Heart left ventricle (tissue), 16 donors: ENCODE measurements at regions of chr10 and their contacts with region 1.

Region 1: DNA sequence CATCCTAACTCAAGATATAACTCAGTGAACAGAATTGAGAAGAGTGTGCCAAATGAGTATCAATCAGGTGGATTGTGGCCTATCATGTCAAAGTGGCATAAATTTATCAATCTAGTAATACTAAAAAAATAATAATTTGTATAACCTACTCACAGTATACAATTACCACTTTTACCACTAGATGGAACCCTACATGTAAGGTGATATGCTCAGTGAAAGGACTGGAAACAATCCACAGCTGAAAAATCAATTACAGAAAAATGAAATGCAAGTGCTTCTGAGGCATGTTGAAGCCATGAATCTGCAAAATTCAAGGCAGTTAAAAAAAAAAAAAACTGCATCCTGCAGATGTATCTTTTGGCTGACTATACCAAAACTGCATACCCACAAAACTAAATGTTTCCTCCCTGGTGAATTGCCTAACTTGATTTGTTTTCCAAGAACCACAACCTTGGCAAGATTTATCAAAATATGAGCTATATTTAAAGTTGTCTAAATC is 13.9 kb downstream of the ARHGAP19 start:
- DNase-seq: no peak
- ATAC-seq: peak; percentile 83 to 94 (median 90)
- H3K4me3 ChIP-seq: no peak overlapping the region
- H3K27ac ChIP-seq: peak overlapping the region in 10 of 12 donors; percentile 11 to 64 (median 44)
- H3K4me1 ChIP-seq: peaks cover 0 to 25% (median 11%) of the 10 kb centered on the region in 12 donors
- H3K27me3 ChIP-seq: no peaks in the 10 kb centered on the region
- CTCF ChIP-seq: peak; percentile 60 to 83 (median 72)
- POLR2A ChIP-seq: no peak

Region 2: GRCh38 chr10:97222326-97222961 is 56.1 kb before region 1 on chr10:
- intact Hi-C with region 1: no loop called
- DNase-seq: no peak
- ATAC-seq: no peak
- H3K4me3 ChIP-seq: no peak overlapping the region
- H3K27ac ChIP-seq: no peak overlapping the region
- H3K4me1 ChIP-seq: peaks cover 0 to 25% (median 0%) of the 10 kb centered on the region in 12 donors
- H3K27me3 ChIP-seq: no peaks in the 10 kb centered on the region
- CTCF ChIP-seq: no peak
- POLR2A ChIP-seq: no peak

Region 3: DNA sequence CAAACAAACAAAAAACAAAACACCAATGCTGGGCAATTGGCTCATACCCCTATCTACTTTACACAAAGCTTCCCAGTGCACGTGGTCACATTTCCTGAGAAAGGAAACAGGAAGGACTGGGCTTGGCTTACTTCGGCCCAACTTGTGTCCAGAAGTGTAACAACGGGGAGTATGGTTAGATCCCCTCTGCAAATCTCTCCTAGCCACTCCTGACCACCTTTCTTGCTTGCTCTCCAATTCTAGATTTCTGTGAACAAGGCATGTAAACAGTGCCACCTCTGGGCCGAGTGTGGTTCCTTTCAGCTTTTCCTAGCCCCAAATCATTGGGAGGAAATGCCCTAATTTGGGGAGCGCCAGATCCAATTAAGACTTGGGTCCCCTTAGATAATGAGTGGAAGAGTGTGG is 77.0 kb after region 1 on chr10:
- intact Hi-C with region 1: loop called in 3 of 10 experiments (anchors 2 to 5 kb)
- DNase-seq: no peak
- ATAC-seq: peak in 3 of 4 donors; percentile 32 to 75 (median 65)
- H3K4me3 ChIP-seq: no peak overlapping the region
- H3K27ac ChIP-seq: peak overlapping the region in 7 of 12 donors; percentile 11 to 73 (median 33)
- H3K4me1 ChIP-seq: peaks cover 0 to 33% (median 8%) of the 10 kb centered on the region in 12 donors
- H3K27me3 ChIP-seq: no peaks in the 10 kb centered on the region
- CTCF ChIP-seq: peak in 11 of 12 donors; percentile 13 to 60 (median 45)
- POLR2A ChIP-seq: no peak

Region 4: GRCh38 chr10:97759158-97759887 is 480.8 kb after region 1 on chr10:
- intact Hi-C with region 1: no loop called
- DNase-seq: peak; percentile 41 to 72 (median 54)
- ATAC-seq: peak; percentile 49 to 85 (median 82)
- H3K4me3 ChIP-seq: no peak overlapping the region
- H3K27ac ChIP-seq: peak overlapping the region in 1 of 12 donors; percentile 38
- H3K4me1 ChIP-seq: peaks cover 0 to 6% (median 0%) of the 10 kb centered on the region in 12 donors
- H3K27me3 ChIP-seq: no peaks in the 10 kb centered on the region
- CTCF ChIP-seq: peak; percentile 78 to 88 (median 84)
- POLR2A ChIP-seq: no peak